Activated B cell treated with CpG ODN at 0.5 μM for 24 hours (primary cell): ENCODE measurements at regions of chr21 and their contacts with region 1.

Region 1: GRCh38 chr21:42537106-42537742 is 23.6 kb downstream of the SLC37A1 start:
- DNase-seq: no peak
- ATAC-seq: no peak
- H3K4me3 Mint-ChIP-seq: peak overlapping the region; percentile 24
- H3K27ac Mint-ChIP-seq: peak overlapping the region; percentile 90
- H3K4me1 Mint-ChIP-seq: peaks cover 56% of the 10 kb centered on the region
- H3K27me3 Mint-ChIP-seq: no peaks in the 10 kb centered on the region
- CTCF ChIP-seq: no peak

Region 2: DNA sequence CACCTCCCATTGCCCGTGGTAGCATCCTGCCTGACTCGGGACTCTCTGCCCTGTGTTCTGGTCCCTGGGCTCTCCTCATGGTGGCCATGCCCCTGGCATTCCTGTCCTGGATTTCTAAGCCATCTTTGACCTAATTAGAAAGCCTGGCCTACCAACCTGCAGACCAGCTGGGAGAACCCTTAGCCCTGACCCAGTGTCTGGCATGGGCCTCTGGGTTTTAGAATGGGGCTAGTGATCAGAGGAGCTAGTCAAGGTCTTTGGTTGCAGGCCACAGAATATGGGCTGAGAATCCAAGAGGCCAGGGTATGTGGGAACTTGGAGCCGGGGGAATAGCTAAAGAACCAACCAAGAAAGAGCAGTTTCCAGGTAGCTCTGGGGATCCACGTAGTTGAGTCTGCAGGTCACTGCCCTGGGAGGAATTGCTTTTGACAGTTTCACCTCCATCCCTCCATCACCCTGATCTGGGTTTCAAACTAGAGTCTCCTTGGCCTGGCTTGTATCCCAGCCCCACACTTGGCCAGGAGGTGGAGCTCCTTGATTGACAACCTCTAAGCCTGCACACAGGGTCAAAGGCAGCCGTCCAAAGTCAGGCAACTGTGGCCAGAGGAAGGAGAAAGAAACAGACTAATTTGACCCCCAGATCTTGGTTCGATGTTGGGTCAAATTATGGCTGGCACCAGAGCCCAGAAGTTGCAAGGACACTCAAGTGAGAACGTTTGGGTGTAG is 373.0 kb before region 1 on chr21:
- CTCF ChIA-PET with region 1: no interaction called
- POLR2A ChIA-PET with region 1: interaction called, 7 read pairs
- intact Hi-C with region 1: loop called (anchors 1 kb)
- DNase-seq: no peak
- ATAC-seq: peak; percentile 76
- H3K4me3 Mint-ChIP-seq: no peak overlapping the region
- H3K27ac Mint-ChIP-seq: no peak overlapping the region
- H3K4me1 Mint-ChIP-seq: peaks cover 14% of the 10 kb centered on the region
- H3K27me3 Mint-ChIP-seq: peaks cover 3% of the 10 kb centered on the region
- CTCF ChIP-seq: no peak

Region 3: DNA sequence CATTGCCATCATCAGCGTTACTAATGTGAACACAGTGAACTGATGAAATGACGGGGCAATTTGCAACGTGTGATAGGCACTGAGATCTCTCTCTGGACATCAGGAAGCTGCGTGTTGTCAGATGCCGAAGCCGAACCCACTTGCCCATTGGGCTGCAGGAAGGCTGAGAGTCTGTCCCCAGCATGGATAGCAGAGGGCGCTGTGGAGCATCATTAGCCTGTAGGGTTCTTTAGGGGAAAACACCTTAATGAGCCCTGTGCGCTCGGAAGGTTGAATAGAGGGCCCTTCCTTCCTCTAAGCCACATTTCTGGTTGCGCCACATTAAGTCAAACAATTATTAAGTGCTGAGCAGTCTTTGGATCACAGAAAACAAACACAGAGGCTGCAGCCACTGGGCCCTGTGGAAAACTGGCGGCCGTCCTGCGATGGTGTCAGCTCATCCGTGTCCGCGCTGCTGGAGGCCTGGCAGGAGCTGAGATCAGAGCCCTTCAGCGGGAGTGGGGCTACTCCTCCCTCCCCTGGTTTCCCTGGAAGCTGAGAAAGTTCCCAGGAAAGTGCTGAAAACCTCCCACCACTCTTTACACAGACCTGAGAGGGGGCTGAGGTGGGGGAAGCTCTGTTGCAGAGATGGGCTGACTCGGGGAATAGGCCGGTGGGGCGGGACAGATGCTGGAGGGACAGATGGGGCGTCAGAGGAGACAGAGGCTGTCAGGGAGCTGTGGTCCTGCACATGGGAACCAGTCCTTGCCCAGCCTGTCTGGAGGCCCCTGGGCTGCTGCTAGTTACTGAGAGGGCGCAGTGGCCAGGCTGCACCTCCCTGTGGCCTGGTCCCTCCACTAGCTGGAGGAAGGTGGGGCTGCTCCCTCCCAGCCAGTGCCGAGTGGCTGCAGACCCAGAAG is 199.1 kb before region 1 on chr21:
- CTCF ChIA-PET with region 1: interaction called, 39 read pairs
- POLR2A ChIA-PET with region 1: interaction called, 4 read pairs
- intact Hi-C with region 1: loop called (anchors 1 kb)
- DNase-seq: peak; percentile 61
- ATAC-seq: peak; percentile 100
- H3K4me3 Mint-ChIP-seq: no peak overlapping the region
- H3K27ac Mint-ChIP-seq: no peak overlapping the region
- H3K4me1 Mint-ChIP-seq: peaks cover 10% of the 10 kb centered on the region
- H3K27me3 Mint-ChIP-seq: peaks cover 13% of the 10 kb centered on the region
- CTCF ChIP-seq: no peak

Region 4: DNA sequence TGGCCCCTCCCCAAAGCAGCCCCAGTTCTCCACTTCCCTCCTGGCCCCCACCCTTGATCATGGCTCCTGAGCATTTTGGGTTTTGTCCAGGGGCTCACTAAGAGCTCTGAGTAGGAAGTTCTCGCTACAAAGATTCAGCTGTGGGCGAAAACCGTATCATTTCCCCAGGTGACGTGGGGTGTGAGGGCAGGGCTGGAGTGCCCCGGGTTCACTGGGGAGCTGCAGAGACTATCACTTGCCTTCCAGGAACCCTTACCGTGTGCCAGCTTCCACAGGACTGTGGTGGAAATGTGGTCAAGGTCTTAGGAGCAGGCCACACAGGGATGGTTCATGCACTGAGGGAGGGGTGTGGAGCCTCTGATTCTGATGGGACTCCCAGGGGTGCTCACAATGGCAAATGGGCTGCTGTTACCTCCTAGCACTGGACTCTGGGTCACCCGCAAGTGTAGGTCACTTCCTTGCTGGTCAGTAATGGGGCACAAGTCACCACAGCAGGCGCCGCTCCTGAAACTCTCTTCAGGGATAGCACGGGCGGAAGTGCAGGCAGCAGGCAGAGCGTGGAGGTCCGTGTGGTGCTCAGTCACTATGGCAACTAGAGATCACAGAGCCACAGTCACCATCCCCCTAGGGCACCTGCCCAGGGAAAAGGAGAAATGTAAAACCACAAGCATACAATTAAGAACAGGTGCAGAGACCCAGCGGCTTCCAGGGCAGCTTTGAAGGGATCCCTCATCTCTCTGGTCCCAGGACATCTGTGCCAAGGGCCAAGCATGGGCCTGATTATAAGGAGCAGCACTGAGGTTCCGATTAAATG is 76.6 kb before region 1 on chr21:
- CTCF ChIA-PET with region 1: interaction called, 38 read pairs
- POLR2A ChIA-PET with region 1: interaction called, 14 read pairs
- intact Hi-C with region 1: loop called (anchors 1 kb)
- DNase-seq: peak; percentile 62
- ATAC-seq: peak; percentile 60
- H3K4me3 Mint-ChIP-seq: peak overlapping the region; percentile 78
- H3K27ac Mint-ChIP-seq: peak overlapping the region; percentile 98
- H3K4me1 Mint-ChIP-seq: peaks cover 65% of the 10 kb centered on the region
- H3K27me3 Mint-ChIP-seq: no peaks in the 10 kb centered on the region
- CTCF ChIP-seq: no peak

Region 5: GRCh38 chr21:42513985-42514882 is 23.0 kb before region 1 on chr21:
- CTCF ChIA-PET with region 1: interaction called, 8 read pairs
- POLR2A ChIA-PET with region 1: interaction called, 91 read pairs
- intact Hi-C with region 1: loop called (anchors 1 kb)
- DNase-seq: peak; percentile 73
- ATAC-seq: peak; percentile 75
- H3K4me3 Mint-ChIP-seq: peak overlapping the region; percentile 84
- H3K27ac Mint-ChIP-seq: peak overlapping the region; percentile 87
- H3K4me1 Mint-ChIP-seq: peaks cover 43% of the 10 kb centered on the region
- H3K27me3 Mint-ChIP-seq: no peaks in the 10 kb centered on the region
- CTCF ChIP-seq: no peak

Region 6: GRCh38 chr21:43323244-43324005 is 786.2 kb after region 1 on chr21:
- CTCF ChIA-PET with region 1: no interaction called
- POLR2A ChIA-PET with region 1: no interaction called
- intact Hi-C with region 1: no loop called
- DNase-seq: no peak
- ATAC-seq: no peak
- H3K4me3 Mint-ChIP-seq: no peak overlapping the region
- H3K27ac Mint-ChIP-seq: no peak overlapping the region
- H3K4me1 Mint-ChIP-seq: peaks cover 29% of the 10 kb centered on the region
- H3K27me3 Mint-ChIP-seq: peaks cover under 1% of the 10 kb centered on the region
- CTCF ChIP-seq: no peak

Region 7: GRCh38 chr21:44382536-44382935 is 1845.3 kb after region 1 on chr21:
- CTCF ChIA-PET with region 1: no interaction called
- POLR2A ChIA-PET with region 1: no interaction called
- intact Hi-C with region 1: no loop called
- DNase-seq: no peak
- ATAC-seq: no peak
- H3K4me3 Mint-ChIP-seq: no peak overlapping the region
- H3K27ac Mint-ChIP-seq: no peak overlapping the region
- H3K4me1 Mint-ChIP-seq: no peaks in the 10 kb centered on the region
- H3K27me3 Mint-ChIP-seq: peaks cover 2% of the 10 kb centered on the region
- CTCF ChIP-seq: no peak